Left lung (tissue), 14 donors: ENCODE measurements at regions of chr5 and their contacts with region 1.

Region 1: GRCh38 chr5:53095931-53096525 is 13.5 kb downstream of the MOCS2 start:
- DNase-seq: peak in 2 of 4 donors; percentile 60 to 62
- ATAC-seq: peak; percentile 96
- H3K4me3 ChIP-seq: no peak overlapping the region
- H3K27ac ChIP-seq: no peak overlapping the region
- H3K4me1 ChIP-seq: no peaks in the 10 kb centered on the region
- H3K27me3 ChIP-seq: no peaks in the 10 kb centered on the region
- CTCF ChIP-seq: peak; percentile 74 to 92

Region 2: DNA sequence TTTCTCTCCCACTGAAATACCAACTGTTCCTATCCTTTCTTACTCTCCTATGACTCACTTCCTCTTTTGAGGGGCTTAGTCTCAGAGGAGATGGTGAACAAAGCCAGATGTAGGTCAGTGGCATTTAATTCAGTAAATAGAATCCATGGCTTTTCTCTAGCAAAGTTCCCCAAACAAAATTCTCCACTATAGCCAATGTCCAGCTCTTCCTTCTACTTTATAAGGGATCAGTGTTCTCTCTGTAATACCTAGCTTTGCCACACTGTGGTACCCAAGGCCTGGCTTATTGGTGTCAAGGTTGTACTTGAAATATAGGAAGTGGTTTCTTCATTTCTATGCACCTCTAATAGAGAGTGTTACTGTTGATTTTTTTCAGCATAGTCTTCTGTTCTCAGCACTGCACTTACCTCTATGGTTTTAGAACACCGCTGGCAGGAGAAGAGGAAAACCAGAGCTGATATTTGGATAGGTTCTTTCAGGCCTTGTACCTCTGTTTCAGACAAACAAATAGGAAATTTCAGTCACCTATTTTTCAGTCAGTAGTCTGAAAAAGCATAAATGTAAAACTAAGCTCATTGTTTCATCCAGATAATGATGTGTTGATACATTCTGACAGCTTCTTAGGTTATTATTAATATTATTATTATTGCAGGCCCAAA is 147.5 kb before region 1 on chr5:
- intact Hi-C with region 1: loop called in 1 of 2 experiments (anchors 5 kb)
- DNase-seq: peak in 3 of 4 donors; percentile 34 to 66 (median 38)
- ATAC-seq: peak; percentile 99
- H3K4me3 ChIP-seq: no peak overlapping the region
- H3K27ac ChIP-seq: peak overlapping the region in 1 of 2 donors; percentile 7
- H3K4me1 ChIP-seq: peaks cover 0 to 15% of the 10 kb centered on the region in 2 donors
- H3K27me3 ChIP-seq: no peaks in the 10 kb centered on the region
- CTCF ChIP-seq: peak; percentile 58 to 70

Region 3: DNA sequence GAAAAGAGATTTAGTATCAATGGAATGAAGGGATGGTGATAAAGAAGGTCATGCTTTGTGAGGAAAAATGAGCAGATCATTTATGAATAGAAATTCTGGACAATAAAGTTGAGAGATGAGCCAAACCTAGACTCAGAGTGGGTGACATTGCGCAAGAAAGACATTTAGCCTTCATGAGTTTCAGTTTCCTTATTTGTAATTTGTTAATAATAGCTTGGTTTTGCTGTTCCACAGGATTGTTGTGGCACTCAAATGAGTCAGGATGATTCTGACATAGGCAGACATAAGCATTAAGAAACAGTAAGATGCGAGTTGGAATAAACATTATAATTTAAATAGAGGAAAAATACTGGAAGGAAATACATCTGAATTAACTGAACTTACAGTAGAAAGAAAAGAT is 72.1 kb before region 1 on chr5:
- intact Hi-C with region 1: no loop called
- DNase-seq: peak in 1 of 4 donors; percentile 32
- ATAC-seq: peak; percentile 57
- H3K4me3 ChIP-seq: no peak overlapping the region
- H3K27ac ChIP-seq: peak overlapping the region; percentile 18 to 26
- H3K4me1 ChIP-seq: peaks cover 5 to 30% of the 10 kb centered on the region in 2 donors
- H3K27me3 ChIP-seq: no peaks in the 10 kb centered on the region
- CTCF ChIP-seq: no peak